ENCODE measurements at regions of chr16 and their contacts with region 1.

Region 1: DNA sequence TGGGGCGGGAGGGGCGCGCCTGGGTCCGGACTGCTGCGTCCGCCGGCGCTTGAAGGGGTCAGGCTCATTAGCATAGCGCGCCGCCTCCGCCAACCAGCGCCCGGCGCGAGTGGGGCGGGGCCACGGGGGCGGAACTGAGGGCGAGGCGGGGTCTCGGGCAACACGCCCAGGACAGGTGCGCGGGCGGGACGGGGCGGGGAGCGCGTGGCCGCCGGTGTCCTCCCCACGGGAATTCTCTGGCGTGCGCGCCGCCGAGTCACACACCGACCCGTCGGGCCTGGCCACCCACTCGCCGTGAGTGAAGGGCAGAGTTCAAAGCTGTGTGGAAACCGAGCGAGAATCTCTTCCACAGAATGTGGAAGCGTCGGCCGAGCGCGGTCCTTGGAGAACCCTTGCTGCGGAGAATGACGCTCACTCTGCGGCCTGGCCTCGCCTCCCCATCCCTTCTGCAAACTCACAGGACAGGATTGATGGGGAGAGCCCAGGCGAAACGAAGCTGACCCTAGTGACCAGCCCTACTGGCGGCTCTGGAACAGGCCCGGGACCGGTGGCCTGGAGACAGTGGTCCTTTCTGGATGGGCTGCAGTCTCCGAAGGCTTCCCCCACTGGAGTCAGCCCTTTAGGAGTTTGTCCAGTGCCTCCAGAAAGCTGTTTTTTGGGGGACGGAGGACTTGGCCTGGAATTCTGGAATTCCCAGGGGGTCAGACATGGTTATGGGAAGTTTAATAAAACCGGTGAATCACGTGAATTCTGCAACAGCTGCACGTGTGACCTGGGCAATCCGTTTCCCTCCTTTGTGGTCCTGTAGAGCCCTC is at the start of gene SNAI3:
- DNase-seq: peak; percentile 92
- H3K4me3 Mint-ChIP-seq: peak within 1 kb of the TSS; percentile 74
- H3K27ac Mint-ChIP-seq: peak within 1 kb of the TSS; percentile 49
- H3K4me1 Mint-ChIP-seq: peaks cover 40% of the 10 kb centered on the region
- H3K27me3 Mint-ChIP-seq: no peaks in the 10 kb centered on the region
- total RNA-seq, gene SNAI3: 5.5 to 5.8 TPM

Region 2: GRCh38 chr16:88599092-88599733 is 87.4 kb before region 1 on chr16:
- CTCF ChIA-PET with region 1: no interaction called
- POLR2A ChIA-PET with region 1: no interaction called
- intact Hi-C with region 1: no loop called
- DNase-seq: no peak
- H3K4me3 Mint-ChIP-seq: no peak overlapping the region
- H3K27ac Mint-ChIP-seq: no peak overlapping the region
- H3K4me1 Mint-ChIP-seq: peaks cover 13% of the 10 kb centered on the region
- H3K27me3 Mint-ChIP-seq: no peaks in the 10 kb centered on the region

Region 3: DNA sequence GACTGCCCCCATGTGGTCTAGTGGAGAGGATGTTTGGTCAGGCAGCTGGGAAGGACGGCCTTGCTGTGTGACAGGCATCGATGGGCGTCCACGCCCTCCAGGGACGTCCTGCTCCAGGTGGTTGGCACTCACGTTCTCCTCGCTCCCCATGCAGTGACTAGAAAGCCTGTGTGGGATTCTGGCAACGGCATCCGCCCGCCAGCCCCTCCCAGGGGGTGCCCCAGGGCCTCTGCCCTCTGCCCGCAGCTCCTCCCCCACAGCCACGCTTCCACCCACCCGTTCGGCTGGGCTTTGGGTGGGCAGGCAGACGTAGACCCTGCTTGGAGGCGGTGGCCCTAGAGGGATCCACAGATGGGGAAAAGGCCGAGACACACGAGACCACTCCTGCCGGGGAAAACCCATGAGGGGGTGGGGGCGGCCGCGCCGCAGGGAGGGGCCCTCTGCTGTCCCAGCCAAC is 52.9 kb before region 1 on chr16:
- CTCF ChIA-PET with region 1: interaction called, 4 read pairs
- POLR2A ChIA-PET with region 1: interaction called, 4 read pairs
- intact Hi-C with region 1: loop called (anchors 10 kb)
- DNase-seq: peak; percentile 78
- H3K4me3 Mint-ChIP-seq: peak overlapping the region; percentile 66
- H3K27ac Mint-ChIP-seq: peak overlapping the region; percentile 54
- H3K4me1 Mint-ChIP-seq: peaks cover 46% of the 10 kb centered on the region
- H3K27me3 Mint-ChIP-seq: peaks cover 17% of the 10 kb centered on the region

Region 4: DNA sequence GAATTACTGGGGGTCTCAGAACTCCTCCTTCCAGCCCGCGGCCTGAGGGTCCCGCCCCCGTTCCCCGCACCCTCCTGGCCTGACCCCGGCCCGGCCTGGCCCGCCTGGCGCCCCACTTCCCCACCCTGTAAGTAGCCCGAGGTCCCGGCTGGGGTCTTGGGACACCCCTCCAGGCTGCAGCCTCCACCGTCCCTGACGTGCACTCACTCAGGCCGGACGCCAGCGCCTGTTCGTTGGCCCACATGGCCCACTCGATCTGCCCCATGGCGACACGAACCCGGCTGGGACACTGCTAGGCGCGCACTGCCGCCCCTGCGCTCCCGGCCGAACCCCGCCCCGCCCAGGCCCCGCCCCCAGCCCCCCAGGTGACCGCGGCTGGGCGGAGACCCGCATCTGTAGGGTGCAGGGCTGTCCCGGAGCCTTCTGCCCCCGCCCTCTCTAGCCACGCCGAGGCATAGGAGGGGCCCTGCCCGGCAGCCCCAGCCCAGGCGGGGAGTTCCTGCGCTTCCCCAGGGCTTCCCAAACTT is 35.8 kb before region 1 on chr16 and contains the start of gene CYBA:
- CTCF ChIA-PET with region 1: interaction called, 4 read pairs
- POLR2A ChIA-PET with region 1: no interaction called
- intact Hi-C with region 1: loop called (anchors 1 kb)
- DNase-seq: peak; percentile 93
- H3K4me3 Mint-ChIP-seq: peak within 1 kb of the TSS; percentile 86
- H3K27ac Mint-ChIP-seq: peak within 1 kb of the TSS; percentile 97
- H3K4me1 Mint-ChIP-seq: peaks cover 14% of the 10 kb centered on the region
- H3K27me3 Mint-ChIP-seq: no peaks in the 10 kb centered on the region
- total RNA-seq, gene CYBA: 262 to 265 TPM

Region 5: DNA sequence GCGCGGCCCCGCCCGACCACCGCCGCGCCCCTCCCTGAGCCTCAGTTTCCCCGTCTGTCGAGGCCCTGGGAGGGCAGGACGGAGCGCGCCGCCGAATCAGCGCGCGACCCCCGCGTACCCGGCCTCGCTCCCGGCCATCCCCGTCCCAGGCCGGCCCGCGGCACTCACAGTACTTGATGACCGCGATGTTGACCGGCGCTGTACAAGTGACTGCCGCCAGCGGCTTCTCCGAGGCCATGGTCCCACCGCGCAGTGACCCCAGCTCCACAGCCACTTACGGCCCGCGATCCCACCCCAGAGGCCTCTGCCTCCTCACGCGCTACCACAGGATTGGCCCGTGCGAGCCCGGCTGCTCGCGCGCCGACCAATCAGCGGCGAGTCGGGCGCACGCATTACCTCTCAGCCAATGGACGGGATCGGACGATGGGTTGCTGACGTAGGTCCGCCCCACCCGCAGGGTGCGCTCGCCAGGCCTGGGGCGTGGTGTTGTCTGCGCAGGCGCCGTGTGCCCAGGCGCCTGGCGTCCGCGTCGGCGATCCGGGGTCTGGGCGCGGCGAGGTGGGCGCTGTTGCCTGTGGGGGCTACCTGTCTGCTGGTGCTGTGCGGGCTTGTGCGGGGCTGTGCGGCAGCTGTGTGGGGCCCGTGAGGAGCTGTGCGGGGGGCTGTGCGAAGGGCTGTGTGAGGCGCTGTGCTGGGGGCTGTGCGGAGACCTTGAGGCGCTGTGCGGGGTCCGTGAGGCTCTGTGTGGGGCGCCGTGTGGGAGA is 23.6 kb before region 1 on chr16 and contains the start of gene MVD:
- CTCF ChIA-PET with region 1: interaction called, 4 read pairs
- POLR2A ChIA-PET with region 1: interaction called, 5 read pairs
- intact Hi-C with region 1: loop called (anchors 1 kb)
- DNase-seq: peak; percentile 98
- H3K4me3 Mint-ChIP-seq: peak within 1 kb of the TSS; percentile 91
- H3K27ac Mint-ChIP-seq: peak within 1 kb of the TSS; percentile 86
- H3K4me1 Mint-ChIP-seq: peaks cover 17% of the 10 kb centered on the region
- H3K27me3 Mint-ChIP-seq: no peaks in the 10 kb centered on the region
- total RNA-seq, gene MVD: 111 to 113 TPM

Region 6: GRCh38 chr16:88700636-88701482 is 14.2 kb after region 1 on chr16:
- CTCF ChIA-PET with region 1: interaction called, 36 read pairs
- POLR2A ChIA-PET with region 1: interaction called, 16 read pairs
- intact Hi-C with region 1: loop called (anchors 1 kb)
- DNase-seq: peak; percentile 98
- H3K4me3 Mint-ChIP-seq: peak overlapping the region; percentile 81
- H3K27ac Mint-ChIP-seq: peak overlapping the region; percentile 91
- H3K4me1 Mint-ChIP-seq: peaks cover 64% of the 10 kb centered on the region
- H3K27me3 Mint-ChIP-seq: no peaks in the 10 kb centered on the region

Region 7: DNA sequence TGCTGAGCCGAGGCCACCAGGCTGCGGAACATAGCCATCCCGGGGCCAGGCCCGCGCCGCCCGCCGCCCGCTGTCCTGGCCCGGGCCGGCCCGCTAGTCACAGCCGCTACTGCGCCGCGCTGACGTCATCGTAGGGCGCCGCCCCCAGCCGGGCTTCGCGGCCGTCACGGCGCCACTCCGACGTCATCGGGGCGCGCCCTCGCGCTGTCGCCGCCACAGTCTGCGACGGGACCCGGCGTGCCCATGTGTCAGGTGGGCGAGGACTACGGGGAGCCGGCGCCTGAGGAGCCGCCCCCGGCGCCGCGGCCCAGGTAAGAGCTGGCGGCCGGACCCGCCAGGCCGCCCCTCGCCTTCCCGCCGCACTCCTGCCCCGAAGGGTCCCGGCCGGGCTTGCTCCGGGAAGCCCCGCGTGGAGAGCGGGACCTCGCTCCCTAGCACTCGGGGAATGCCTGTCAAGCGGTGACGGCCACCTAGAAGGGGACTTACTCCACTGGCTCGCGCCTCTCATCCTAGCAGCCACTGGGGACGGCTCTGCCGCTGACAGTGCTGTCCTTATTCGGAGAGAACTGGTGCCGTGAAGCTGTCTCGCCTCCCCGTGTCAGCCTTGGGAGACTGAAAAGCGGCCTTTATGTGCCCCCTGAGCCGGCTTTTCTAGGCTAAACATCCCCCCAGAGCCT is 19.8 kb after region 1 on chr16 and contains the starts of genes CTU2 and RNF166:
- CTCF ChIA-PET with region 1: interaction called, 36 read pairs
- POLR2A ChIA-PET with region 1: interaction called, 16 read pairs
- intact Hi-C with region 1: loop called (anchors 1 kb)
- DNase-seq: peak; percentile 94
- H3K4me3 Mint-ChIP-seq: peak within 1 kb of the TSS; percentile 82
- H3K27ac Mint-ChIP-seq: peak within 1 kb of the TSS; percentile 91
- H3K4me1 Mint-ChIP-seq: peaks cover 47% of the 10 kb centered on the region
- H3K27me3 Mint-ChIP-seq: no peaks in the 10 kb centered on the region
- total RNA-seq, gene CTU2: 38.0 to 41.6 TPM
- total RNA-seq, gene RNF166: 46.4 to 55.6 TPM

Region 8: DNA sequence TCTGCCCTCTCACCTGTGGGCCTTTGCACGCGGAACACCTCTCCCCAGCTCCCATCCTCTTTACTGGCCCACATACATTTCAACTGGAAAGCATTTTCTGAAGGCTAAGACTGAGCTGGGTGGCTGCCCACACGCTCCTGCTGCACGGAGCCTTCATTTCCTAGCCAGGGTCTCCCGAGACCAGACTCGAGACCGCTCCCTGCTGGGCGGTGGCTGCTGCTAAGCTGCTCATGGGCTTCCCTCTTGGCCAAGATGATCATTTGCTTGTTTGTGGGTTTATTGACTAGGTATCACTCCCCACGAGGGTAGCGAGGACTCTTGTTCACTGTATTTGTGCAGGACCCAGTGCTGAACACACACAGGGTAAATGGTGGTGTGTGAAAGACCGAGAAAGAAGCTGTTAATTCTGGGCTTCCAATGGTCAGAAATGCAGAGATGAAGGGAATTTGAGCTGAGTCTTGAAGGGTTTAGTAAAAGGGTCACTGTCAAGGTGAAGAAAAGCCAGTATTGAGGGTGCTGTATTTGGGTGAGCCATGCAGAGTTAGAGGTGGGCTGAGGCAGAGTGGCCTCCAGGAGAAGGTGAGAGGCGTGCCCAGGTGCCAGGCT is 171.2 kb after region 1 on chr16:
- CTCF ChIA-PET with region 1: no interaction called
- POLR2A ChIA-PET with region 1: no interaction called
- intact Hi-C with region 1: no loop called
- DNase-seq: peak; percentile 82
- H3K4me3 Mint-ChIP-seq: peak overlapping the region; percentile 93
- H3K27ac Mint-ChIP-seq: peak overlapping the region; percentile 55
- H3K4me1 Mint-ChIP-seq: peaks cover 21% of the 10 kb centered on the region
- H3K27me3 Mint-ChIP-seq: no peaks in the 10 kb centered on the region